ENCODE measurements at regions of chr19 and their contacts with region 1.

Region 1: DNA sequence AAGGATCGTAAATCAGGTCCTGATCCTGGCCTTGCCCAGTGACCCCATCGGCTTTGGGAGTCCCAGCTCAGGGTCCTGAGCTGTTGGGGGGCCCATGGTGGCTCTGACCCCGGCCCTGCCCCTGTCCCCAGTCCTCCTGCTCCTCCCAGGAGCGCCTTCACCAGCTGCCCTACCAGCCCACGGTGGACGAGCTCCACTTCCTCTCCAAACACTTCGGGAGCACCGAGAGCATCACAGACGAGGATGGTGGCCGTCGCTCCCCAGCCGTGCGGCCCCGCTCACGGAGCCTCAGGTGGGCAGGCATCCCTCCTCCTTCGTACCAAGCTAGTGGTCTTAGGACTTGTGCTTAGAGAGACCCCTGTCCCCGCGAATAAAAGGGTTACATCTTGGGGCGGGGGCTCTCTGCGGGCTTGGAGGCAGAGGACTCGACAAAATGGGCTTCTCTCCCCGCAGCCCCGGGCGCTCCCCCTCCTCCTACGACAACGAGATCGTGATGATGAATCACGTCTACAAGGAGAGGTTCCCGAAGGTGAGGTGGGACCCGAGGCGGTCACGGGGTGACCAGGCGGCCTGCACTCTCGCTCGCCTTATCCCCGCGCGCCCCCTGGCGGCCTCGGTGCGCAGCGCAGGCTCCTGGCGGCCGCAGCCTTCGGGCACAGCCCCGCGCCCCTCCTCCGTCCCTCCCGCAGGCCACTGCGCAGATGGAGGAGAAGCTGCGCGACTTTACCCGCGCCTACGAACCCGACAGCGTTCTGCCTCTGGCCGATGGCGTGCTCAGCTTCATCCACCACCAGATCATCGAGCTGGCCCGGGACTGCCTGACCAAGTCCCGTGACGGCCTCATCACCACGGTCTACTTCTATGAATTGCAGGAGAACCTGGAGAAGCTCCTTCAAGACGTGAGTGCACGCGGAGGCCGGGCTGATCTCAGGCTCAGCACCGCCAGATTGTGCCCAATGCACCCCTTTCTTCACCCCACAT is 9.1 kb downstream of the MAST1 start:
- DNase-seq: peak; percentile 90
- H3K4me3 Mint-ChIP-seq: peak overlapping the region; percentile 29
- H3K27ac Mint-ChIP-seq: no peak overlapping the region
- H3K4me1 Mint-ChIP-seq: peaks cover 5% of the 10 kb centered on the region
- H3K27me3 Mint-ChIP-seq: peaks cover 25% of the 10 kb centered on the region

Region 2: GRCh38 chr19:12596927-12597548 is 250.4 kb before region 1 on chr19:
- CTCF ChIA-PET with region 1: no interaction called
- POLR2A ChIA-PET with region 1: no interaction called
- intact Hi-C with region 1: no loop called
- DNase-seq: no peak
- H3K4me3 Mint-ChIP-seq: no peak overlapping the region
- H3K27ac Mint-ChIP-seq: no peak overlapping the region
- H3K4me1 Mint-ChIP-seq: no peaks in the 10 kb centered on the region
- H3K27me3 Mint-ChIP-seq: no peaks in the 10 kb centered on the region

Region 3: GRCh38 chr19:12766051-12766521 is 81.4 kb before region 1 on chr19:
- CTCF ChIA-PET with region 1: interaction called, 280 read pairs
- POLR2A ChIA-PET with region 1: interaction called, 3 read pairs
- intact Hi-C with region 1: loop called (anchors 2 kb)
- DNase-seq: peak; percentile 91
- H3K4me3 Mint-ChIP-seq: peak overlapping the region; percentile 43
- H3K27ac Mint-ChIP-seq: no peak overlapping the region
- H3K4me1 Mint-ChIP-seq: peaks cover 12% of the 10 kb centered on the region
- H3K27me3 Mint-ChIP-seq: no peaks in the 10 kb centered on the region

Region 4: GRCh38 chr19:12777217-12778016 is 70.0 kb before region 1 on chr19:
- CTCF ChIA-PET with region 1: interaction called, 10 read pairs
- POLR2A ChIA-PET with region 1: interaction called, 3 read pairs
- intact Hi-C with region 1: no loop called
- DNase-seq: peak; percentile 87
- H3K4me3 Mint-ChIP-seq: peak overlapping the region; percentile 76
- H3K27ac Mint-ChIP-seq: peak overlapping the region; percentile 87
- H3K4me1 Mint-ChIP-seq: peaks cover 40% of the 10 kb centered on the region
- H3K27me3 Mint-ChIP-seq: no peaks in the 10 kb centered on the region

Region 5: GRCh38 chr19:12806239-12807081 is 41.0 kb before region 1 on chr19 and contains the start of gene RNASEH2A:
- CTCF ChIA-PET with region 1: interaction called, 17 read pairs
- POLR2A ChIA-PET with region 1: no interaction called
- intact Hi-C with region 1: no loop called
- DNase-seq: peak; percentile 93
- H3K4me3 Mint-ChIP-seq: peak within 1 kb of the TSS; percentile 92
- H3K27ac Mint-ChIP-seq: peak within 1 kb of the TSS; percentile 83
- H3K4me1 Mint-ChIP-seq: peaks cover 20% of the 10 kb centered on the region
- H3K27me3 Mint-ChIP-seq: no peaks in the 10 kb centered on the region
- total RNA-seq, gene RNASEH2A: 61.9 to 66.8 TPM

Region 6: DNA sequence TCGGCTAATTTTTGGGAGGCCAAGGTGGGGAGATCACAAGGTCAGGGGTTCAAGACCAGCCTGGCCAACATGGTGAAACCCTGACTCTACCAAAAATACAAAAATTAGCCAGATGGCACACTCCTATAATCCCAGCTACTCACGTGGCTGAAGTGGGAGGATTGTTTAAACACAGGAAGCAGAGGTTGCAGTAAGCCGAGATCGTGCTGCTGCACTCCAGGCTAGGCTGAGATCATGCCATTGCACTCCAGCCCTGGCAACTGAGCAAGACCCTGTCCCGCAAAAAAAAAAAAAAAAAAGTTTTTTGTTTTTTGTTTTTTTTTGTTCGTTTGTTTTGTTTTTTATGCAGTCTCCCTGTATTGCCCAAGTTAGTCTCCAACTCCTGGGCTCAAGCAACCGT is 12.1 kb after region 1 on chr19:
- CTCF ChIA-PET with region 1: interaction called, 13 read pairs
- POLR2A ChIA-PET with region 1: no interaction called
- intact Hi-C with region 1: no loop called
- DNase-seq: no peak
- H3K4me3 Mint-ChIP-seq: no peak overlapping the region
- H3K27ac Mint-ChIP-seq: no peak overlapping the region
- H3K4me1 Mint-ChIP-seq: no peaks in the 10 kb centered on the region
- H3K27me3 Mint-ChIP-seq: peaks cover 2% of the 10 kb centered on the region

Region 7: DNA sequence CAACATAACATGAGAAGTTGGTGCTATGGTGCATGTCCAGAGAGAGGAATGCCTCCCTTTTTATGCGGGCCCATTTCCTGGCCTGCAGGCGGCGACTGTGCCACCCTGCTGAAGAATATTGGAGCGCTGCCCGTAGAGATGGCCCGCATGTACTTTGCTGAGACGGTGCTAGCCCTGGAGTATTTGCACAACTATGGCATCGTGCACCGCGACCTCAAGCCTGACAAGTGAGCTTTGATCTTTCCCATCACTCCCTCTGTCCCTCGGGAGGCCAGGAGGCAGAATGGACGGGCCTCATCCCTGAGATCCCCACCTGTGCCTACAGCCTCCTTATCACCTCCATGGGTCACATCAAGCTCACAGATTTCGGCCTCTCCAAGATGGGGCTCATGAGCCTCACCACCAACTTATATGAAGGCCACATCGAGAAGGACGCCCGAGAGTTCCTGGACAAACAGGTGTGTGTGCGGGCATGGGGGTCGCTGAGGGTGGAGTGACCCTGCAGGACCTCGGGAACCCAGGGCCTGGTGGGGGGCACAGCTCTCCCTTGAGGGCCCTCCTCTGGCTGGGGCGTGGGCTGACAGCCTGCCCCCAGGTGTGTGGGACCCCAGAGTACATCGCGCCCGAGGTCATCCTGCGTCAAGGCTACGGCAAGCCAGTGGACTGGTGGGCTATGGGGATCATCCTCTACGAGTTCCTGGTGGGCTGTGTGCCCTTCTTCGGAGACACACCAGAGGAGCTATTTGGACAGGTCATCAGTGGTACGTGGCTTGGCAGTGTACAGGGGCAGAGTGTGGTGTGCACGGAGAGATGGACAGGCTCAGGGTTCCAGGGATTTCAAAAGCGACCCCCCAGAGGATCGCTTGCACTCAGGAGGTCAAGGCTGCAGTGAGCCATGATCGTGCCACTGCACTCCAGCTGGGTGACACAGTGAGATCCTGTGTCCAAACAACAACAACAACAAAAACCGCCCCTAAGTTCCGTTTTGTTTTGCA is 17.6 kb after region 1 on chr19:
- CTCF ChIA-PET with region 1: interaction called, 13 read pairs
- POLR2A ChIA-PET with region 1: no interaction called
- intact Hi-C with region 1: no loop called
- DNase-seq: no peak
- H3K4me3 Mint-ChIP-seq: no peak overlapping the region
- H3K27ac Mint-ChIP-seq: no peak overlapping the region
- H3K4me1 Mint-ChIP-seq: peaks cover 7% of the 10 kb centered on the region
- H3K27me3 Mint-ChIP-seq: peaks cover 15% of the 10 kb centered on the region

Region 8: DNA sequence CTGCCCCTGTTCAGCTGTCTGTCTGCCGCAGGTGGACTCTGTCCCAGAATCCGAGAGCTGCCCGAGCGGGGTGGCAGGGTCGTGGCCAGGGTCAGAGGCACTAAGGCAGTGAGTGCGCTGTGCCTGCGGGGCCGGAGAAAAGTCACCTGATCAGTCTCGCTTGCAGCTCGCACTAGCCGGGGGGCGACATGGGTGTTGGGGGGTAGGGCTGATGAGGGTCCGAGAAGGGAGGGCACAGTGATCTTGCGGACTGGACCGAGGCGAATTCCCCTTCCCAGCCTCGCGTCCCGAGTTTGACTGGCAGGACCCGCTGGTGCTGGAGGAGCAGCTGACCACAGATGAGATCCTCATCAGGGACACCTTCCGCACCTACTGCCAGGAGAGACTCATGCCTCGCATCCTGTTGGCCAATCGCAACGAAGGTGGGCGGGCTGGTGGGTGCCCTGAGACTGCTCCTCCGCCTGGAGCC is 44.1 kb after region 1 on chr19:
- CTCF ChIA-PET with region 1: no interaction called
- POLR2A ChIA-PET with region 1: no interaction called
- intact Hi-C with region 1: no loop called
- DNase-seq: no peak
- H3K4me3 Mint-ChIP-seq: peak overlapping the region; percentile 99
- H3K27ac Mint-ChIP-seq: peak overlapping the region; percentile 81
- H3K4me1 Mint-ChIP-seq: peaks cover 25% of the 10 kb centered on the region
- H3K27me3 Mint-ChIP-seq: no peaks in the 10 kb centered on the region